ENCODE measurements at regions of chr7 and their contacts with region 1.

Region 1: GRCh38 chr7:127585044-127585953 is at the start of gene GCC1:
- DNase-seq: peak; percentile 94 to 99
- ATAC-seq: peak; percentile 93
- H3K4me3 ChIP-seq: peak within 1 kb of the TSS; percentile 51 to 66
- H3K27ac ChIP-seq: peak within 1 kb of the TSS in 1 of 2 donors; percentile 87
- H3K4me1 ChIP-seq: peaks cover 1 to 4% of the 10 kb centered on the region in 2 donors
- H3K27me3 ChIP-seq: no peaks in the 10 kb centered on the region
- total RNA-seq, gene GCC1: 13.1 to 13.6 TPM

Region 2: GRCh38 chr7:127392566-127393367 is 192.5 kb before region 1 on chr7 and contains the start of gene ZNF800:
- intact Hi-C with region 1: loop called (anchors 10 kb)
- DNase-seq: peak; percentile 94 to 96
- ATAC-seq: peak; percentile 98
- H3K4me3 ChIP-seq: peak within 1 kb of the TSS; percentile 64 to 93
- H3K27ac ChIP-seq: peak within 1 kb of the TSS; percentile 68 to 70
- H3K4me1 ChIP-seq: peaks cover 0 to 2% of the 10 kb centered on the region in 2 donors
- H3K27me3 ChIP-seq: no peaks in the 10 kb centered on the region
- total RNA-seq, gene ZNF800: 39.5 to 46.8 TPM

Region 3: DNA sequence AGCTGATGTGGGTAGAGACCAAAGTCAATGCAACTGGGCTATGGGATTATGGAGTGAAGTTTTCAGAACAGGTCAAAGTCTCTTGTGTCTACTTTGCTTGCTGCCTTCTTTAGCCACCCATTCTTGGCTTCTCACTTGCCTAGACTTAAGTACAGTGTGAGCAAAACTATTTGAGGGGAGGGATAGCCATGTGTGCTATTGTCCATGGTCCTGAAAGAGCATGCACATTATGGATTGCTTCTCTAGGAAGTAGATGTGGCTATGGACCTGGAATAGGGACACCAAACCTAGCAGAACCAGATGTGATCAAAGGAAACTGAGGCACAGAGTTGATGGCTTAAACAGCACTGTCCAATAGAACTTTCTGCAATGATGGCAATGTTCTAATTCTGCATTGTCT is 110.8 kb before region 1 on chr7:
- intact Hi-C with region 1: no loop called
- DNase-seq: no peak
- ATAC-seq: no peak
- H3K4me3 ChIP-seq: no peak overlapping the region
- H3K27ac ChIP-seq: no peak overlapping the region
- H3K4me1 ChIP-seq: no peaks in the 10 kb centered on the region
- H3K27me3 ChIP-seq: no peaks in the 10 kb centered on the region

Region 4: DNA sequence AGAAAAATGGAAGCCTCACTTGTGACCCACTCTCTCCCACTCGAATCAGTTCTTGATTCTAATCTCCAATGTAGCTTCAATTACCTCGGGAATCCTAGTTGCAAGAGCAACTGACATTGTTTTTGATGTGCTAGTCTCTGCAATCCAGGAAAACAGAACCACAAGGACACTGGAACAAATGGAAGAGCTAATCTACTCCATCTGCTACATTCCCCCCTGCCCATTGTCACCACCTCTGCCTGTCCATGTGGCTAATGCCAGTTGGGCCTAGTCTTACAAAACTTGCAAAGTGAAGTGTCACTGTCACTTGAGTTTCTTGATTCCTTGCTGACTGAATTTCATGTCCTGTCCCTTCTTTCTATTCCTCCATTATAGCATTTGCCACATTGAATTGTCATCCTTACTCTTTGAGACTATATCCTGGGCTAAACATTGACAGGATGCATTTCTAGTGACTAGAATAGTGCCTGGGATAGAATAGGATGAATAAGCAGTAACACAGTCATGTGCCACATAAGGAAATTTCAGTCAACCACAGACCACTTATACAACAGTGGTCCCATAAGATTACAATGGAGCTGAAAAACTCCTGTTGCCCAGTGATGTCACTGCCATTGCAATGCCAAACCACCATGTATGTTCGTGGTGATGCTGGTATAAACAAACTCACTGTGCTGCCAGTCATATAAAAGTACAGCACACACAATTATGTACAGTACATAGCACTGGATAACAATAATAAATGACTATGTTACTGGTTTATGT is 13.4 kb before region 1 on chr7:
- intact Hi-C with region 1: no loop called
- DNase-seq: no peak
- ATAC-seq: no peak
- H3K4me3 ChIP-seq: no peak overlapping the region
- H3K27ac ChIP-seq: no peak overlapping the region
- H3K4me1 ChIP-seq: no peaks in the 10 kb centered on the region
- H3K27me3 ChIP-seq: no peaks in the 10 kb centered on the region

Region 5: DNA sequence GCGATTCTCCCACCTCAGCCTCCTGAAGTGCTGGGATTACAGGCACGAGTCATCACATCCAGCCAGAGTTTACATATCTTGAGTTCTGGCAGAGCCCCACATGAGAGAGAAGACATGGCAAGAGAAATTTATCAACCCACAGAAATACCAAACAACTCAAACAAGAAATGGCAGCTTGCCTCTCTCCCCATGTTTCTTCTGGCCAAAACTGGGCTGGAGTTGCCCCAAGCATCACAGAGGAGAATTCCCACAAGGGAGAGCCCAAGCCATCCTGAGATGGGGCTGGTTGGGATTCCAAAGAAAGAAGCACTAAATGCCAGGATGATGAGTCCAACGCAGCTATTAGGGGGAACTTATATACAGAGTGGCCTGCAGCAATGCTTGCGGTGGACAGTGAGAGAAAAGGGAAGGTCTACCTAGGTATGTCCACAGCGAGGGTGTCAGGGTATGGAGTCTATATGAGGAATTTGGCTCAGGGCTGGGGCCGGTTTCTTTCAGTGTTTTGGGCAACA is 47.0 kb after region 1 on chr7:
- intact Hi-C with region 1: loop called in 1 of 2 experiments (anchors 5 kb)
- DNase-seq: peak in 1 of 2 donors; percentile 51
- ATAC-seq: peak; percentile 34
- H3K4me3 ChIP-seq: no peak overlapping the region
- H3K27ac ChIP-seq: no peak overlapping the region
- H3K4me1 ChIP-seq: no peaks in the 10 kb centered on the region
- H3K27me3 ChIP-seq: no peaks in the 10 kb centered on the region

Region 6: GRCh38 chr7:127651556-127652332 is 66.4 kb after region 1 on chr7 and contains the start of gene SND1:
- intact Hi-C with region 1: loop called (anchors 1 to 5 kb)
- DNase-seq: peak; percentile 99 to 100
- ATAC-seq: peak; percentile 98
- H3K4me3 ChIP-seq: peak within 1 kb of the TSS; percentile 72 to 79
- H3K27ac ChIP-seq: peak within 1 kb of the TSS; percentile 43 to 93
- H3K4me1 ChIP-seq: no peaks in the 10 kb centered on the region
- H3K27me3 ChIP-seq: no peaks in the 10 kb centered on the region
- total RNA-seq, gene SND1: 136 to 150 TPM

Region 7: GRCh38 chr7:127683776-127684681 is 98.7 kb after region 1 on chr7:
- intact Hi-C with region 1: no loop called
- DNase-seq: no peak
- ATAC-seq: no peak
- H3K4me3 ChIP-seq: no peak overlapping the region
- H3K27ac ChIP-seq: no peak overlapping the region
- H3K4me1 ChIP-seq: peaks cover 0 to 2% of the 10 kb centered on the region in 2 donors
- H3K27me3 ChIP-seq: no peaks in the 10 kb centered on the region

Measured in aorta (tissue), 5 donors.